B cell (primary cell): ENCODE measurements at regions of chr14 and their contacts with region 1.

Region 1: DNA sequence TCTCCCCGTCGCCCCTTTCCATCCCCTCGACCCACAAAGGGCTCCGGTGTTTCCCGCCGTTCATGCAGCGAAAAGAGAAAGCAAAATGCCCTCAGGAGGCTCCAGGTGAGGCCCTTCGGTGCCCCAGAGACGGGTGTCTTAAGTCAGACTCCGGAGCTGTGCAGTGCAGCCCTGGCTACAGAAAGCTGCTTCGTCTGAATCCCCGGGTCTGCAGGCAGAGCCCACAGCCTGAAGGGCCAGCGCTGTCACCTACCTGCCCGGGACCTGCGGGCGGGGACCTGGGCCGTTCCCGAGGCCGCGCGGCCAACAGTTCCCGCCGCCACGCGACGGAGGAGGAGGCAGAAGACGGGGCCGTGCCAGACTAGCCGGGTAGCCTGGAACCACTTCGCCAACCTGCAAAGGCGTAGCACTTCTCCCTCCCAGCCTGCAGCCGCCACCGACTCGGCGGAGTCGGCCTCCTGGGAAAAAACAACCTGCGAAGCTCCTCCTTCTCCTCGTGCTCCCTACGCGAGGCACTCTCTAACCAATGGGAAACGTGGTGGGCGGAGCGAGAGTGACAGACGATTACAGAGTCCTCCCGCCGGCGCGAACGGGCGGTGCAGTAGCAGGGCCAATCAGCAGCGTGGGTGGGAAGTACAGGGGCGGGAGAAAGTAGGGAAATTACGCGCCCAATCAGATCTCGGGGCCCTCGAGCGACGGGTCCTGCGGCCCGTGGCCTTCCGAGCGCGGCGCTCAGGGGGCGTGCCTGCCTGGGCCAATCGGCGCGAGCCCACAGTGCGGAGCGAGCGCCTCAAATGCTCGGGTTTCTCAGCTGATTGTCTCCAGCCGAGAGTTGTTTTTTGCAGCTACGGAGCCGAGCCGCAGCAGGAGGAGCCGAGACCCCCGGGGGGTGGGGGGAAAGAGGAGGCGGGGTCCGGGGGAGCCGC is at the starts of genes GPR137C and TXNDC16:
- DNase-seq: peak; percentile 100
- ATAC-seq: peak; percentile 87
- H3K4me3 ChIP-seq: peak within 1 kb of the TSS; percentile 52 to 88 (median 82)
- H3K4me3 Mint-ChIP-seq: peak within 1 kb of the TSS; percentile 97
- H3K27ac ChIP-seq: peak within 1 kb of the TSS; percentile 77 to 89
- H3K27ac Mint-ChIP-seq: peak within 1 kb of the TSS; percentile 88
- H3K4me1 ChIP-seq: peaks cover 16 to 24% of the 10 kb centered on the region in 2 donors
- H3K4me1 Mint-ChIP-seq: peaks cover 20% of the 10 kb centered on the region
- H3K27me3 ChIP-seq: peaks cover 0 to 13% (median 13%) of the 10 kb centered on the region in 4 experiments
- H3K27me3 Mint-ChIP-seq: peaks cover 10% of the 10 kb centered on the region
- CTCF ChIP-seq: peak; percentile 6
- total RNA-seq, gene GPR137C: 0.67 and 0.95 TPM in 2 replicates
- total RNA-seq, gene TXNDC16: 5.2 and 7.0 TPM in 2 replicates

Region 2: DNA sequence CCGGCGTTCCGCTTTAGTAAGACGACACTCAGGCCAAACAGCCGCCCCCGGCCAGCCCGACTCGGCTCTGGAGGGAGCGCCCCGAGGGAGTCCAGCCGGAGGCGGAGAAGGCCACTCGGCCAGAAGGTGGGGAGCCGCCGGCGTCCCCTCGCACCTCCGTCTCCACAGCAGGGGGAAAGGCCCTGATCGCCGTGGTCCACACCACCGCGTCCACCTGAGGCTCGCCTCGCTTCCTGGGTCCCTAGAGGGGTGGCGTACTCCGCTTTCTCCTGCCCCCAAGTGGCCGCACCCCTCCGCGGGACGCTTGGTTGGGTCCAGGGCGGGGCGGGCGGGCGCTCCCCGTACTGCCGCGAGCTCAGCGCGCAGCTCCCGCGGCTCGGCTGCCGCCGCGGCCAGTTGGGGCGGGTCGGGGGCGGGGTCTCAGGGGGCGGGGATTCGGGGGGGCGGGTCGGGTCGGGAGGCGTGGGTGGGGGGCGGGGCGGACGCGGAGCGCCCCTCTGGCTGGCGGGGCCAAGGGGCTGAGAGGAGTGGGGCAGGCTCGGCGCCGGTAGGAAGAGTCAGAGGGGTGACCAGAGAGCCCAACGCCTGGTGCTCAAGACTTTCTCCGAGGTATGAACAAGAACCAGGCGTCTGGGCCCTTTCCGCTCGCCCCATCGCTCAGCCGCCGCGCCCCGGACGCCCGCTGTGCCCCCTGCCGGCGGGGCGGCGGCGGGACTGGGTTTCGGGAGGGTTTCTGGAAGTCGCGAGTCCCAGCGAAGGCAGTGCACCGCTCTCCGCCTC is 900.7 kb before region 1 on chr14 and contains the start of gene FRMD6:
- CTCF ChIA-PET with region 1: no interaction called
- POLR2A ChIA-PET with region 1: no interaction called
- intact Hi-C with region 1: loop called (anchors 2 kb)
- DNase-seq: peak; percentile 90
- ATAC-seq: peak; percentile 80
- H3K4me3 ChIP-seq: peak within 1 kb of the TSS; percentile 34 to 85 (median 69)
- H3K4me3 Mint-ChIP-seq: peak within 1 kb of the TSS; percentile 85
- H3K27ac ChIP-seq: no peak within 1 kb of the TSS
- H3K27ac Mint-ChIP-seq: peak within 1 kb of the TSS; percentile 56
- H3K4me1 ChIP-seq: peaks cover 19 to 25% of the 10 kb centered on the region in 2 donors
- H3K4me1 Mint-ChIP-seq: peaks cover 12% of the 10 kb centered on the region
- H3K27me3 ChIP-seq: peaks cover 0 to 37% (median 34%) of the 10 kb centered on the region in 4 experiments
- H3K27me3 Mint-ChIP-seq: peaks cover 41% of the 10 kb centered on the region
- CTCF ChIP-seq: peak; percentile 75
- total RNA-seq, gene FRMD6: 0.17 and 0.30 TPM in 2 replicates

Region 3: GRCh38 chr14:52299692-52300278 is 252.5 kb before region 1 on chr14:
- CTCF ChIA-PET with region 1: interaction called, 3 read pairs
- POLR2A ChIA-PET with region 1: no interaction called
- intact Hi-C with region 1: loop called (anchors 5 kb)
- DNase-seq: peak; percentile 60
- ATAC-seq: peak; percentile 28
- H3K4me3 ChIP-seq: no peak overlapping the region
- H3K4me3 Mint-ChIP-seq: no peak overlapping the region
- H3K27ac ChIP-seq: no peak overlapping the region
- H3K27ac Mint-ChIP-seq: no peak overlapping the region
- H3K4me1 ChIP-seq: no peaks in the 10 kb centered on the region
- H3K4me1 Mint-ChIP-seq: no peaks in the 10 kb centered on the region
- H3K27me3 ChIP-seq: no peaks in the 10 kb centered on the region
- H3K27me3 Mint-ChIP-seq: peaks cover 19% of the 10 kb centered on the region
- CTCF ChIP-seq: peak; percentile 89

Region 4: GRCh38 chr14:52695481-52696091 is 143.3 kb after region 1 on chr14 and contains the start of gene ERO1A:
- CTCF ChIA-PET with region 1: interaction called, 3 read pairs
- POLR2A ChIA-PET with region 1: interaction called, 3 read pairs
- intact Hi-C with region 1: loop called (anchors 1 kb)
- DNase-seq: peak; percentile 79
- ATAC-seq: peak; percentile 77
- H3K4me3 ChIP-seq: peak within 1 kb of the TSS; percentile 86 to 94 (median 89)
- H3K4me3 Mint-ChIP-seq: peak within 1 kb of the TSS; percentile 96
- H3K27ac ChIP-seq: peak within 1 kb of the TSS; percentile 70 to 87
- H3K27ac Mint-ChIP-seq: peak within 1 kb of the TSS; percentile 93
- H3K4me1 ChIP-seq: peaks cover 5 to 7% of the 10 kb centered on the region in 2 donors
- H3K4me1 Mint-ChIP-seq: peaks cover 26% of the 10 kb centered on the region
- H3K27me3 ChIP-seq: no peaks in the 10 kb centered on the region
- H3K27me3 Mint-ChIP-seq: no peaks in the 10 kb centered on the region
- CTCF ChIP-seq: no peak
- total RNA-seq, gene ERO1A: 29.7 and 32.8 TPM in 2 replicates

Region 5: DNA sequence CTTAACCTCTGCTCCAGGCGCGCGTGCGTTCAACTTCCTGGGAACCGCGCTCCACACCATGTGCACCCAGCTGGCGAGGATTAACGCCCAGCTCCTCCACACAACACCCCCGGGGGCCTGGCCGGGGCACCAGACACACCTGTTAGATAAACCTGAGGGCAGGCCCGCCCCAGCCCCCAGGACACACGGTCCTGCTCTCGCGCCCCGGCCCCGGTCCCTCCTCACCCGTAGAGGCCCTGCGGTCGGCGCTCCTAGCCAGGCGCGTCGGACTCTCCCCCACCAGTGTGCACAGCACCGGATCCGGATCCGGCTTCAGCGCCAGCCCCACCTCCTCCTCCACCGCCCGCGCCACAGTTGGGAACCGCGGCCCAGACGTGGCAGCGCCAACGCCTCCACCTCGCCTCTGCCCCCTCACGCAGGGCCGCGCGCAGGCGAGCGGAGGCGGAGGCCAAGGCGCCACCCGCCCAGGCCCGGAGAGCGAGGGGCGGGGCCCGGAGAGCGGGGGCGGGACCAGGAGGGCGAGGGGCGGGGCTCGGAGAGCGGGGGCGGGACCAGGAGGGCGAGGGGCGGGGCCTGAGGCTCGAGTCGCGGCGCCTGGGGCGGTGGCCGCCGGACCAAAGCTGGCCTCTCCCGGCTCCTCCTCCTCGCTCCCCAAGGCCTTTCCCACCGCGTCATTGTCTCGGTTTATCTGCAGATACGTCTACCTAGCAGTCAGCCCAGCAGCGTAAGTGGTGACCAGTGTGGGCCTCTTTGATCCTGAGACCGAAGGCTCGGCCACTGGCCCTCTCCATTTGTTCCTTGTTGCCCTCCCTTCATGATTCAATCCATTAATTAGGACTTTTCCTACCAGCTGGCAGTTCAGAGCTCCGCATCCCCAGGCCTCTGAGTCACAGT is 239.1 kb after region 1 on chr14 and contains the start of gene GNPNAT1:
- CTCF ChIA-PET with region 1: no interaction called
- POLR2A ChIA-PET with region 1: interaction called, 4 read pairs
- intact Hi-C with region 1: loop called (anchors 1 kb)
- DNase-seq: peak; percentile 89
- ATAC-seq: peak; percentile 96
- H3K4me3 ChIP-seq: peak within 1 kb of the TSS; percentile 58 to 87 (median 80)
- H3K4me3 Mint-ChIP-seq: peak within 1 kb of the TSS; percentile 89
- H3K27ac ChIP-seq: peak within 1 kb of the TSS; percentile 35 to 58
- H3K27ac Mint-ChIP-seq: peak within 1 kb of the TSS; percentile 86
- H3K4me1 ChIP-seq: peaks cover 14 to 20% of the 10 kb centered on the region in 2 donors
- H3K4me1 Mint-ChIP-seq: peaks cover 26% of the 10 kb centered on the region
- H3K27me3 ChIP-seq: no peaks in the 10 kb centered on the region
- H3K27me3 Mint-ChIP-seq: no peaks in the 10 kb centered on the region
- CTCF ChIP-seq: no peak
- total RNA-seq, gene GNPNAT1: 7.8 and 8.3 TPM in 2 replicates

Region 6: DNA sequence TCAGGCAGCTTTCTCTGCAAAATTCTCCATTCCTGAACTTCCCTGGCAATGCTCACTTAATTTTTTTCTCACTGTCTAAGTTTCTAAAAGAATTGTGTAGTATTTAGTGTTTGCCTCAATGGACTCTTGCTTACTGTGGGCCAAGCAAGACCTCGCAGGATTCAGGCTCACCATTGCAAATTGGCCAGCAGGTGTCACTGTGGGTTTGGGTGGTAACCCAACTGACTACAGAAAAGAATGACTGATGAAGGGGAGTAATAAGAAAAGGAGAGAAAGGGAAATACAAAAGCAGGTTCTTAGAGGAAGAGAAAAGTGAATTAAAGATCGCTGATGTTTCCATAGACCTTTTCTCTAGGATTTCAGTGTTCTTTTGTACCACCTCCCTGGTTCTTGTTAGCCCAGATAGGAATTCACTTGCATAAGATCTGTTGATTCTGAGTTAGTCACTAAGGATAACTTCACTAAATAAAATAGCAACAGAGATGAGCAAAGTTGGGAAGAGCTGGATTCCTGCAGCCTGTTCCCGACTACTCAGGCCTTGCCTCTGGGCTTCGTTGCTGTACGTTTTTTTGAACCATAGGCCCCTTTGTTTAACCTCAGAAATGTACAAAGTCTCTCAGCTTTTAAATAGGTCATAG is 987.3 kb after region 1 on chr14:
- CTCF ChIA-PET with region 1: no interaction called
- POLR2A ChIA-PET with region 1: no interaction called
- intact Hi-C with region 1: no loop called
- DNase-seq: peak; percentile 69
- ATAC-seq: peak; percentile 79
- H3K4me3 ChIP-seq: no peak overlapping the region
- H3K4me3 Mint-ChIP-seq: no peak overlapping the region
- H3K27ac ChIP-seq: no peak overlapping the region
- H3K27ac Mint-ChIP-seq: no peak overlapping the region
- H3K4me1 ChIP-seq: no peaks in the 10 kb centered on the region
- H3K4me1 Mint-ChIP-seq: peaks cover 2% of the 10 kb centered on the region
- H3K27me3 ChIP-seq: no peaks in the 10 kb centered on the region
- H3K27me3 Mint-ChIP-seq: peaks cover 4% of the 10 kb centered on the region
- CTCF ChIP-seq: peak; percentile 88

Region 7: GRCh38 chr14:53613404-53614253 is 1061.3 kb after region 1 on chr14:
- CTCF ChIA-PET with region 1: no interaction called
- POLR2A ChIA-PET with region 1: no interaction called
- intact Hi-C with region 1: loop called (anchors 5 kb)
- DNase-seq: peak; percentile 82
- ATAC-seq: peak; percentile 90
- H3K4me3 ChIP-seq: peak overlapping the region in 1 of 5 experiments; percentile 18
- H3K4me3 Mint-ChIP-seq: peak overlapping the region; percentile 81
- H3K27ac ChIP-seq: peak overlapping the region; percentile 37 to 65
- H3K27ac Mint-ChIP-seq: peak overlapping the region; percentile 99
- H3K4me1 ChIP-seq: peaks cover 14 to 18% of the 10 kb centered on the region in 2 donors
- H3K4me1 Mint-ChIP-seq: peaks cover 38% of the 10 kb centered on the region
- H3K27me3 ChIP-seq: no peaks in the 10 kb centered on the region
- H3K27me3 Mint-ChIP-seq: no peaks in the 10 kb centered on the region
- CTCF ChIP-seq: no peak